Natural killer cell (primary cell): ENCODE measurements at regions of chr1 and their contacts with region 1.

Region 1: GRCh38 chr1:156767101-156767878 is at the start of gene PRCC:
- DNase-seq: peak; percentile 94 to 99
- ATAC-seq: peak; percentile 91 to 98 (median 93)
- H3K4me3 ChIP-seq: peak within 1 kb of the TSS; percentile 86
- H3K4me3 Mint-ChIP-seq: no peak within 1 kb of the TSS
- H3K27ac ChIP-seq: peak within 1 kb of the TSS; percentile 98
- H3K27ac Mint-ChIP-seq: no peak within 1 kb of the TSS
- H3K4me1 ChIP-seq: peaks cover 33% of the 10 kb centered on the region
- H3K4me1 Mint-ChIP-seq: peaks cover 33 to 39% of the 10 kb centered on the region in 2 donors
- H3K27me3 ChIP-seq: no peaks in the 10 kb centered on the region
- H3K27me3 Mint-ChIP-seq: no peaks in the 10 kb centered on the region
- CTCF ChIP-seq: no peak
- total RNA-seq, gene PRCC: 66.5 to 92.4 (median 69.1) TPM

Region 2: DNA sequence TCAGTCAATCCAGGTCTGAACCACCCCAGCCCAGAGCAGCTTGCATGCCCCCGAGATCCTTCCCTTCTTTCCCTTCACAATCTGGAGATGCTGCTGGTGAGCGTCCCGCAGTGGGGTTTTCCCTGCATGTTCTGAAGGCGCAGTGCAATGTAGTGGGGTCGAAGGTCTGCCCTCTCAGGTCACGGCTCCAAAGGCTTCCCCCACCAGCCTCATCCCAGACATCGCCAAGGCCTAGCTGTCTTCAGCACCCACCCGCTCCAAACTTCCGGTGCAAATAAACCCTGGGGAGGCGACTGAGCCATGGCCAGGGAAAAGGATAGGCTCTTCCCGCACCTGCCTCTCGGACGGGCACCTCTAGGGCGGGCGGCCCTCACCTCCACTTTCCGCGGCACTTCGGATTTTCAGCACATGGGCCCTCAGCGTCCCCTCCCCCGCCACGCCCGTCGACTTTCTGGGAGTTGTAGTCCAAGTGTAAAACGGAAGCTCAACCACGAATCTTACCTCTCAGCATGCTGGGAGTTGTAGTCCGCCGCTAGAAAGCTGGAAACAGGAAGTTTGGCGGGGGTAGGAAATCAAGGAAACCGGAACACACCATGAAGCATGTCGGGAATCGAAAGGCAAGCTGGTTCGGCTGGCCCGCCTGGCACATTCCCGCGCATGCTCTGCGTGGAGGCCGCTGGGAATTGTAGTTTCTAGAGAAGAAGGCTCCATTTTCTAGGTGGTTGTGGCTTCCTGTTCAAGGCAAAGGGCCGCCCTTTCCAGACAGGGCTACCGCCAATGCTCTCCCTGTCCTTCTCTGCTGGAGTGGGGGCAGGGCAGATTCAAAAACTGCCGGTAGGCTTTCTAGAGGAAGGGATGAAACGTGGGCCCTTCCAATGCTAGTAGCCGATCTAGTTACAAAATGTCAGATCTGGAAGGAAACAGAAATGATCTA is 26.3 kb before region 1 on chr1 and contains the start of gene MRPL24:
- intact Hi-C with region 1: loop called (anchors 1 kb)
- DNase-seq: peak; percentile 91 to 99
- ATAC-seq: peak; percentile 91 to 97 (median 93)
- H3K4me3 ChIP-seq: peak within 1 kb of the TSS; percentile 52
- H3K4me3 Mint-ChIP-seq: peak within 1 kb of the TSS; percentile 92
- H3K27ac ChIP-seq: peak within 1 kb of the TSS; percentile 84
- H3K27ac Mint-ChIP-seq: peak within 1 kb of the TSS; percentile 95 to 96
- H3K4me1 ChIP-seq: peaks cover 15% of the 10 kb centered on the region
- H3K4me1 Mint-ChIP-seq: peaks cover 30% of the 10 kb centered on the region in 2 donors
- H3K27me3 ChIP-seq: no peaks in the 10 kb centered on the region
- H3K27me3 Mint-ChIP-seq: no peaks in the 10 kb centered on the region
- CTCF ChIP-seq: no peak
- total RNA-seq, gene MRPL24: 15.9 to 19.7 (median 18.7) TPM

Region 3: GRCh38 chr1:156746728-156747631 is 20.3 kb before region 1 on chr1:
- intact Hi-C with region 1: loop called (anchors 1 kb)
- DNase-seq: peak; percentile 46 to 80
- ATAC-seq: peak; percentile 35 to 54 (median 47)
- H3K4me3 ChIP-seq: peak overlapping the region; percentile 40
- H3K4me3 Mint-ChIP-seq: peak overlapping the region; percentile 86
- H3K27ac ChIP-seq: peak overlapping the region; percentile 89
- H3K27ac Mint-ChIP-seq: peak overlapping the region; percentile 92 to 94
- H3K4me1 ChIP-seq: peaks cover 54% of the 10 kb centered on the region
- H3K4me1 Mint-ChIP-seq: peaks cover 53 to 62% of the 10 kb centered on the region in 2 donors
- H3K27me3 ChIP-seq: no peaks in the 10 kb centered on the region
- H3K27me3 Mint-ChIP-seq: no peaks in the 10 kb centered on the region
- CTCF ChIP-seq: no peak

Region 4: DNA sequence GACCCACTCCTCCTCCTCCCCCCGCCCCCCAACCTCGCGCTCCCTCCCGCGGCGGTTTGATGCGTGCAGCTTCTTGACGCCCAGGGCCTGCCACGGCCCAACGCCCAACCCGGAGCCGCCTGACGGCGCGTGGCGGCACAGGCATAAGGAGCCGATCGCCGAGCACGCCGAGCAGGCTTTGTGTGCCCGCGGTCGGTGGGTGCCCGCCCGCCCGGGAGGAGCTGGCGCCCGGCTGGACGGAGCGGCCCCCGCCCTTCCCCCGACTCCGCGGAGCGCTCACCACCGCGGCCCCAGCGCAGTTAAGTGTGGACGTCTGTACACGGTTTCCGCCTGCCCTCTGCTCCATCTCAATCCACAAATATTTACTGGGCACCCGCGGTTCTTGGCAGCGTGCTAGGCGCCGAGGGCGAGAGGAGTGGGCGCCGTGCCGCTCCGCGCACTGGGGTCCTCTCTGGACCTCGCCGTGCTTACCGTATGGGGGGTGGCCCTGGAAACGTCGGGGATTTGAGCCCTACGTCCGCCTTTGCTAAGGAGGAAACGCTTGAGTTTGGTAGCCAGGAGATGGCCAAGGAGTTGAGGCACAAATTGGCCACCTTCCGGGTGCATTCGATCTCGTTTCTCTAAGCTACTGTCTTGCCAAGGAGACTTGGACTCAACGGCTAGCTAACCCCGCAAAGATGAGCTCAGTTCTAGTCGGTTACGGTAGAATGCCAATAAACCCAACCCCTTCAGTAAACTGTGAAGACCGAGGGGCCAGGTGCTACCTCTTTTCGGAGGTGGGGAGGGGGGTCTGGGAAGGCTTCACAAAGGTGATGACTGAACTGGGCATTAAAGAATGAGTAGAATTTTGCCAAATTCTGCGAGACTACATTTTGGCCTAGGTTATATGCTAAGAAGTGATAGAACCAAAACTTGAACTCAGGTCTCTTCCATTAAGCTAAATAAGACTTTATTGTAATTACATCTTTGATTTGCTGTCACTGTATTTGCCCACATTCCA is 15.2 kb before region 1 on chr1:
- intact Hi-C with region 1: loop called (anchors 1 kb)
- DNase-seq: peak; percentile 88 to 97
- ATAC-seq: peak; percentile 83 to 95 (median 88)
- H3K4me3 ChIP-seq: peak overlapping the region; percentile 98
- H3K4me3 Mint-ChIP-seq: peak overlapping the region; percentile 91
- H3K27ac ChIP-seq: peak overlapping the region; percentile 92
- H3K27ac Mint-ChIP-seq: peak overlapping the region; percentile 90 to 94
- H3K4me1 ChIP-seq: peaks cover 52% of the 10 kb centered on the region
- H3K4me1 Mint-ChIP-seq: peaks cover 47 to 50% of the 10 kb centered on the region in 2 donors
- H3K27me3 ChIP-seq: no peaks in the 10 kb centered on the region
- H3K27me3 Mint-ChIP-seq: no peaks in the 10 kb centered on the region
- CTCF ChIP-seq: no peak

Region 5: GRCh38 chr1:156816561-156817328 is 49.5 kb after region 1 on chr1 and contains the start of gene SH2D2A:
- intact Hi-C with region 1: loop called (anchors 1 kb)
- DNase-seq: peak; percentile 94 to 100
- ATAC-seq: peak; percentile 77 to 92 (median 84)
- H3K4me3 ChIP-seq: peak within 1 kb of the TSS; percentile 76
- H3K4me3 Mint-ChIP-seq: peak within 1 kb of the TSS; percentile 96
- H3K27ac ChIP-seq: peak within 1 kb of the TSS; percentile 99
- H3K27ac Mint-ChIP-seq: peak within 1 kb of the TSS; percentile 98
- H3K4me1 ChIP-seq: peaks cover 61% of the 10 kb centered on the region
- H3K4me1 Mint-ChIP-seq: peaks cover 67 to 79% of the 10 kb centered on the region in 2 donors
- H3K27me3 ChIP-seq: no peaks in the 10 kb centered on the region
- H3K27me3 Mint-ChIP-seq: no peaks in the 10 kb centered on the region
- CTCF ChIP-seq: no peak
- total RNA-seq, gene SH2D2A: 155 to 324 (median 312) TPM

Region 6: DNA sequence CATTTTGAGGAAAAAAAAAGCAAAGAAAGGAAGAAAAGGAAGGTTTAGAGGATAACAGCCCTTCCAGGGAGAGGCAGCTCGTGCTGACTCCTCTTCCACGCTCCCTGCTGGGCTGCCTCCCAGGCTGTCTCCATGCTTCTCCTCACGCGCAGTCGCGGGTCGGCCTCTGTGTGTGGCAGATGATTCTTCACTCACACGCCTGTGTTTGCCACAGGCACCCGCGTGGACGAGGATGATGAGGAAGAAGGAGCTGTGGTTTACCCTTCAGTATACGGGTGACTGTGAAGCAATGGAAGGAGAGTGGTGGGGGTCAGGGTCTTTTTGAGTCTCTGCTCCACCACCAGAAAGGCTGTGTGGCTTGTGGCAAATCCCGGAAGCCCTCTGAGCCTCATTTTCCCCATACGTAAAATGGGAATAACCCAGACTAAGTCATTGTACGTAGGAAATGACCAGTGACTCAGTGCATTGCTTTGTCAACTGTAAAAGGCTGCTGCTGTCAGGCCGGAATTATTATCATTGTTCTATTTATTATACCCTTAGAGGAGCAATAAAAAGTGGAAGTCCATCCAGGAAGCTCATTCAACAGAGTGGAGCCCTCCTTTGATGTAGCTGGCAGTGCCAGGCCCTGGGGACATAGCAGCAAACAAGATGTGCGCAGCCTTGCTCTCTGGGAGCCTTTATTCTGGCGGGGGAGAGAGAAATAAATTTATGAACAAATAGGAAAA is 61.3 kb after region 1 on chr1:
- intact Hi-C with region 1: no loop called
- DNase-seq: no peak
- ATAC-seq: no peak
- H3K4me3 ChIP-seq: no peak overlapping the region
- H3K4me3 Mint-ChIP-seq: no peak overlapping the region
- H3K27ac ChIP-seq: no peak overlapping the region
- H3K27ac Mint-ChIP-seq: no peak overlapping the region
- H3K4me1 ChIP-seq: no peaks in the 10 kb centered on the region
- H3K4me1 Mint-ChIP-seq: peaks cover 0 to 5% of the 10 kb centered on the region in 2 donors
- H3K27me3 ChIP-seq: no peaks in the 10 kb centered on the region
- H3K27me3 Mint-ChIP-seq: no peaks in the 10 kb centered on the region
- CTCF ChIP-seq: no peak